ENCODE measurements at regions of chr5 and their contacts with region 1.

Region 1: DNA sequence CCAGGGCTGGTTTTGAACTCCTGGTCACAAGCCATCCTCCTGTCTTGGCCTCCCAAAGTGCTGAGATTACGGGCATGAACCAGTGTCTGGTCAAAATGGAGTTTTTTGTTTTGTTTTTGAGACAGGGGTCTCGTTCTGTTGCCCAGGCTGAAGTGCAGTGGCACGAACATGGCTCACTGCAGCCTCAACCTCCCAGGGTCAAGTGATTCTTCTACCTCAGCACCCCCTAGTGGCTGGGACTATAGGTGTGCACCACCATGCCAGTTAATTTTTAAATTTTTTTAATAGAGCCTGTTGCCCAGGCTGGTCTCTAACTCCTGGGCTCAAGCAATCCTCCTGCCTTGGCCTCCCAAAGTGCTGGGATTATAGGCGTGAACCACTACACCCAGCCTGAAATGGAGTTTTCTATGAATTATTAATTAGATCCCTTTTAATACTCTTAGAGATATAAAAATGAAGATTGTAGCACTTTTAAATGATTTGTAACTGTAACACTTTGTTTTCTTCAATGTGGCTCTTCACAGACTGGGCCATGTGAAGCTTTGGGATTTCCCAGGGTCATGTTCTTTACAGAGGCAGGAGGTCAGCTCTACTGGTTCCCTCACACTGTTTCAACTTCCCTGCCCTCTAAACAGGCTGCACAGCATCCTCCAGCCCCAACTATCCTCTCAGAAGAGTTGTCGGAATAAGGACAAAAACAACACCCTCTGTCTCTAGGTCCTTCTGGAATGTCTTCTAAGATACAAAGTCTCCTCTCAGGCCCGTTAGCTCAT is 32.7 kb upstream of the SPARC start:
- DNase-seq: no peak
- H3K4me3 ChIP-seq: no peak overlapping the region
- CTCF ChIP-seq: peak; percentile 45

Region 2: DNA sequence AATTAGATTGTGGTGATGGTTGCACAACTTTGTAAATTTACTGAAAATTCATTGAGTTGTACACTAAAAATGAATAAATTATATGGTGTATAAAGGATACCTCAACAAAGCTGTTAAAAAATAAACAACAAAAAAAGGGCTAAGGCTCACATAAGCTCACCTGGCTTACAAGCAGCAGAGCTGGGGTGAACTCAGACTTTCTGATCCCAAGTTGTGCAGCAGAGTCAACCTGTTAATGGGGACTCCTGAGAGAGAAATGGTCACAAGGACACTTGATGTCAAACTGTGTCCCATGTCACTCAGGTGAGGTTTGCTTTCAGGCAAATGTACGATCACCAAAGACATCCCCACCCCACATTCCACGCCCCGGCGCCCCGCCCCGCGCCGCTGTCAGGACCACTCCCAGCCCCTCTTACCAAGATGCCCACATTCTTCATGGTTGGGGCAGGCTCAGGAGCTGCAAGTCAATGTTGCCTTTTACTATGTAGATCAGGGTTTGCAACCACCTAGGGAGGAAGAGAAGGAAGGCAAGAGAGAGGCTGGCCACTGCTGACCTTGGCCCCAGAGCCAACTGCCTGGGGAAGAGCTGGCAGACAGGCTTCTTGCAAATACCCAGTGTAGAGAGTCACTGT is 294.4 kb before region 1 on chr5:
- CTCF ChIA-PET with region 1: no interaction called
- POLR2A ChIA-PET with region 1: no interaction called
- DNase-seq: no peak
- H3K4me3 ChIP-seq: no peak overlapping the region
- CTCF ChIP-seq: no peak

Region 3: DNA sequence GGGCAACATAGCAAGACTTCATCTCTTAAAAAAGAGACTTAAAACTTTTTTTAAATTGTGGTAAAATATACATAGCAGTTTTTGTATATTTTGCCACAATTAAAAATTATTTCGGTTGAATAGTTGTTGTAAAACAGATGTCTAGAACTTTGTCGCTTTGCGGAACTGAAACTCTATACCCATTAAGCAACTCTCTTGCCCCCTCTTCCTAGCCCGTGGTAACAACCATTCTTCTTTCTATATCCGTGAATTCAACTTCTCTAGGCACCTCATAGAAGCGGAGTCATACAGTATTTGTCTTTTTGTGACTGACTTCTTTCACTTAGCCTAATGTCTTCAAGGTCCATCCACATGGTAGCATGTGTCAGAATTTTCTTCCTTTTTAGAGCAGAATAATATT is 76.0 kb before region 1 on chr5:
- CTCF ChIA-PET with region 1: no interaction called
- POLR2A ChIA-PET with region 1: no interaction called
- DNase-seq: no peak
- H3K4me3 ChIP-seq: no peak overlapping the region
- CTCF ChIP-seq: no peak

Region 4: GRCh38 chr5:151664694-151665585 is 54.5 kb before region 1 on chr5:
- CTCF ChIA-PET with region 1: interaction called, 17 read pairs
- POLR2A ChIA-PET with region 1: interaction called, 22 read pairs
- DNase-seq: no peak
- H3K4me3 ChIP-seq: no peak overlapping the region
- CTCF ChIP-seq: no peak

Region 5: GRCh38 chr5:151699071-151699901 is 20.1 kb before region 1 on chr5:
- CTCF ChIA-PET with region 1: interaction called, 107 read pairs
- POLR2A ChIA-PET with region 1: interaction called, 26 read pairs
- DNase-seq: peak; percentile 95
- H3K4me3 ChIP-seq: no peak overlapping the region
- CTCF ChIP-seq: no peak

Measured in AG04449 (cell line).